Vagina (tissue), 2 donors: ENCODE measurements at regions of chr16 and their contacts with region 1.

Region 1: DNA sequence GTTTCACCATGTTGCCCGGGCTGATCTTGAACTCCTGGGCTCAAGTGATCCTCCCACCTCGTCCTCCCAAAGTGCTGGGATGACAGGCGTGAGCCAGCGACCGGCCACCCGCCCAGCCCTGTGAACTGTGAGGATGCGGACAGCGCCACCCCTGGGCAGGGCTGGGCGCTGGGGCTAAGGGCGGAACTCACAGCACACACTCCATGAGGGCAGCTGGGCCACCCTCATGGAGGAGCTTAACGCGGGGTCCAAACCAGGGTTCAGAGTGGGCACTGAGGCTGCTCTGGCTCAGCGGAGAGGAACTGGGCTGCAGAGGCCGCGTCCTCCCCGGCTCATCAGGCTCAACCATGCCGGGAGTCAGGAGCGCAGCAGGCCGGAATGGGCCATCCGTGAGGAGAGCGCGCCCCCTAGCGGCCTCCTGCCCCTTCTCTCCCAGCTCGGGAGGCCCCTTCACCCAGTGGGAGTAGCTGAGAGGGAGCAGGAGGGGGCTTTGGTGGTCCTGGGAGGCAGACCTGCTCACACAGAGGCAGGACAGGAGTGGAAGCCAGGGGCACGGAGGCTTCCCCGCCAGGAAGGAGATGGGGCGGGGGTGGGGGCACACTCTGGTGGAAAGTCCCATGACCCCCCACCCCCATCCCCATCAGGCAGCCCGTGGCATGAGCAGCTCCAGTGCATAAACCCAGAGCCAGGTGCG is 13.8 kb downstream of the CORO7 start:
- DNase-seq: no peak
- H3K4me3 ChIP-seq: peak overlapping the region in 1 of 2 donors; percentile 15
- H3K27ac ChIP-seq: peak overlapping the region; percentile 29
- H3K4me1 ChIP-seq: peaks cover 6% of the 10 kb centered on the region
- H3K27me3 ChIP-seq: no peaks in the 10 kb centered on the region
- CTCF ChIP-seq: peak; percentile 91 to 98 (median 95)
- POLR2A ChIP-seq: no peak

Region 2: DNA sequence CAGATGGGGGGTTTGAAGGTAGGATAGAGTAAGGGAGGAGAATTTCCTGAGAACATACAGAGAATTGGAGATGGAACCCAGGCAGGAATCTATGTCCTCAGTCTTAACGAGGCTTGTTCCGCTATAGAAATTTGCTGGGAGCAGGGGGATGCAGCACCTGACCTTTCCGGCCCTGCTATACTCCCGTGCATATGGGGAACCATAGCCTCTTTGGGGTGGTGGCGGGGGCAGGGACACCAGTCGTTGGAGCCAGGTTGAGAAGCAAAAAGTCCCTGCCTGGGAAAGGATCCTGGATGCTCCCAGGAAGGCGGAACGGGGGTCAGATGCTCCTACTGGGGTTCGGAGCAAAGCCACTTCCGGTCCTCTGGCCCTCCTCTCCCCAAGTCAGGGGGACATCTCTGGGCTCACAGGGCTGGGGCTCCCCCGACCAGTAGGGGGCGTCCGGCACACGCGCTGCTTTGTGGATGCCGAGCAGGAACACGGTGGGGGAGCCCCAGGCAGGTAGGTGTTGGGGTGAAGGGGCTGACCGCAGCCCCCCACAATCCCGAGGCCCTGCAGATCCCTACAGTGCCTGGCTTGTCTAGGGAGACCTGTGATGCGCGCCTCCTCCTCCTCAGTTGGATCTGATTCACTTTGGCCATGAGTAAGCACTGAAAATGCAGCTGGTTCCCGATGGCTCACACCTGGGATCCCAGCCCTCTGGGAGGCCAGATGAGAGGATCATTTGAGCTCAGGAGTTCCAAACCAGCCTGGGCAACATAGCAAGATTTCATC is 114.3 kb before region 1 on chr16:
- intact Hi-C with region 1: loop called (anchors 5 kb)
- DNase-seq: no peak
- H3K4me3 ChIP-seq: peak overlapping the region in 1 of 2 donors; percentile 12
- H3K27ac ChIP-seq: no peak overlapping the region
- H3K4me1 ChIP-seq: peaks cover 24% of the 10 kb centered on the region
- H3K27me3 ChIP-seq: no peaks in the 10 kb centered on the region
- CTCF ChIP-seq: peak; percentile 92 to 97 (median 95)
- POLR2A ChIP-seq: no peak

Region 3: DNA sequence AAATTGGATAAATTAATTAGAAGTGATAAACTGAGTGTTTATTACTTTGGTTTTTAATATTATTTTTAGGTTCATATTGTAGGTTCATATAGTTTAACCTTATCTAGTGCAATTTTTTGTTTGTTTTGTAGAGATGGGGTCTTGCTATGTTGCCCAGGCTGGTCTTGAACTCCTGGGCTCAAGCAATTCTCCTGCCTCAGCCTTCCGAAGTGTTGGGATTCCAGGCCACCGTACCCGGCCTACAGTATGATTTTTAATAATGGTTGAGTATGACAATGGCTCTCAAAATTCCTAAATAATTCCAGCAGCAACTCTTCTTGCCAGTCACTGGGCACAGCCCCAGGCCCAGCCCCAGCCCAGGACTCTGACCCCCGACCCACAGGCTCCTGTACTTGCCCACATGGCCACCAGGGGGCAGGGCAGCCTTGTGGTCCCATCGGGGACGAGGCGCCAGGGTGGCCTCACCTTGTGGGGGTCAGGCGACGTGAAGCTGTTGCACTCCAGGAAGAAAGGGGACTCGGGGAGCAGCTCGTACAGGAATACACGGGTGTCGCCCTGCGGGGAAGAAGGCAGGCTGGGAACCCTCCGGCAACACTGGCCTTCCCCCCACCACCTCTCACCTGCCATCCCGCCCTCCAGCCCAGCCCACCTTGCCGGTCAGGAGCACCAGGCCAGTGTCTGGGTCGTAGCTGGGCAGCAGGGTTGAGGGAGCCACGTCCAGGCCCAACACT is 43.6 kb before region 1 on chr16:
- intact Hi-C with region 1: loop called (anchors 2 kb)
- DNase-seq: no peak
- H3K4me3 ChIP-seq: no peak overlapping the region
- H3K27ac ChIP-seq: no peak overlapping the region
- H3K4me1 ChIP-seq: peaks cover 5% of the 10 kb centered on the region
- H3K27me3 ChIP-seq: no peaks in the 10 kb centered on the region
- CTCF ChIP-seq: peak; percentile 97 to 99 (median 98)
- POLR2A ChIP-seq: no peak